K562 (cell line): ENCODE measurements at regions of chr7 and their contacts with region 1.

Region 1: GRCh38 chr7:140375892-140376730 is 22.2 kb downstream of the SLC37A3 start:
- DNase-seq: no peak
- ATAC-seq: peak; percentile 39
- H3K4me3 ChIP-seq: no peak overlapping the region
- H3K27ac ChIP-seq: no peak overlapping the region
- H3K4me1 ChIP-seq: no peaks in the 10 kb centered on the region
- H3K27me3 ChIP-seq: no peaks in the 10 kb centered on the region
- CTCF ChIP-seq: no peak
- EP300 ChIP-seq: no peak
- POLR2A ChIP-seq: no peak
- RAD21 ChIP-seq: no peak

Region 2: GRCh38 chr7:140390466-140391190 is 14.5 kb after region 1 on chr7:
- CTCF ChIA-PET with region 1: no interaction called
- POLR2A ChIA-PET with region 1: interaction called, 15 read pairs
- in situ Hi-C with region 1: no loop called
- intact Hi-C with region 1: no loop called
- DNase-seq: no peak
- ATAC-seq: no peak; the same call in 2 of the 3 replicates
- H3K4me3 ChIP-seq: no peak overlapping the region
- H3K27ac ChIP-seq: no peak overlapping the region
- H3K4me1 ChIP-seq: peaks cover 23 to 26% of the 10 kb centered on the region in 2 experiments; a peak in 4 of 5 replicates
- H3K27me3 ChIP-seq: no peaks in the 10 kb centered on the region
- CTCF ChIP-seq: no peak
- EP300 ChIP-seq: no peak
- POLR2A ChIP-seq: no peak
- RAD21 ChIP-seq: no peak

Region 3: GRCh38 chr7:140506788-140507464 is 130.8 kb after region 1 on chr7:
- CTCF ChIA-PET with region 1: no interaction called
- POLR2A ChIA-PET with region 1: no interaction called
- in situ Hi-C with region 1: no loop called
- intact Hi-C with region 1: no loop called
- DNase-seq: peak in 2 of 4 experiments; percentile 23 to 68
- ATAC-seq: peak; percentile 47
- H3K4me3 ChIP-seq: no peak overlapping the region
- H3K27ac ChIP-seq: peak overlapping the region; percentile 70
- H3K4me1 ChIP-seq: peaks cover 24 to 27% of the 10 kb centered on the region in 2 experiments; a peak in 4 of 5 replicates
- H3K27me3 ChIP-seq: no peaks in the 10 kb centered on the region
- CTCF ChIP-seq: peak in 1 of 3 experiments; percentile 37; a peak in 2 of 6 replicates
- EP300 ChIP-seq: no peak
- POLR2A ChIP-seq: no peak
- RAD21 ChIP-seq: no peak; a peak in 1 of 4 replicates